ENCODE measurements at regions of chr10 and their contacts with region 1.

Region 1: DNA sequence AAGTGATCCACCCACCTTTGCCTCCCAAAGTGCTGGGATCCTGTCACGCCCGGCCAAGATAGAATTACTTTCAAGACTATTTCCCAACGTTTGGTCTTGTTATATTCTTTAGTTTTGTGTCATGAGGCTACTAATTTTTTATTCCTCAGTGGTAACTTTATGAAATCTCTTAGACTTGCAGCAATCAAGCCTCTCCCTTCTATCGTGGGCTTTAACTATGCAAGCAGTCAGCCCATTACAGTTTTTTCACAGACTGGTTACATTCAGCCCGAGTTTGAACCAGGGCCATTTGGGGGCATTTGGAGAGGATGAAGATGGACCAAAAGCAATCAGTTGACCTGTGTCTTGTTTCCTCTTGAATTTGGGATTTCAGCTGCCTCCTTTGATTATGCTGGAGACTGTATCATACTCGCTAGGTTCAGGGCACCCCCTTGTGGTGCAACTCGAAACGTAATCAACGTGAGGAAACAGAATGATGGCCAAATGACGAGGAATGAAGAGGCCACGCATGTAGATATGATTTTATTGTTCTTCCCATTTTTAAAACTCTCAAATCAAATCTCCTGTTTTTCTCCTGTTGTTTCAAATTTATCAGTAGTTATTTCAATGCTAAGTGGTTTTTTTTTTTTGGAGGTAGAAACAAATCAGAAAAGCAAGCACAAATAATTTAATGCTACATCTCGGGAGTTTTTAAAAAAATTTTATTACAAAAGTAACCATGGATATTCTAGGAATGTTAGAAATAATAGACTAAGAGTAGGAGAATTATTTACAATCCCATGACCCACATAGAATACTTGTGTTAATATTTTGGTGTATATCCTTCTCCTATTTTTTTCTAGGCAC is 151.6 kb downstream of the KIAA1217 start:
- DNase-seq: peak; percentile 40
- H3K4me3 Mint-ChIP-seq: no peak overlapping the region
- H3K27ac Mint-ChIP-seq: no peak overlapping the region
- H3K4me1 Mint-ChIP-seq: no peaks in the 10 kb centered on the region
- H3K27me3 Mint-ChIP-seq: no peaks in the 10 kb centered on the region

Region 2: GRCh38 chr10:24255881-24256311 is 104.6 kb before region 1 on chr10:
- CTCF ChIA-PET with region 1: no interaction called
- DNase-seq: no peak
- H3K4me3 Mint-ChIP-seq: no peak overlapping the region
- H3K27ac Mint-ChIP-seq: no peak overlapping the region
- H3K4me1 Mint-ChIP-seq: no peaks in the 10 kb centered on the region
- H3K27me3 Mint-ChIP-seq: no peaks in the 10 kb centered on the region

Region 3: GRCh38 chr10:24503461-24504320 is 143.2 kb after region 1 on chr10:
- CTCF ChIA-PET with region 1: interaction called, 12 read pairs
- DNase-seq: peak; percentile 40
- H3K4me3 Mint-ChIP-seq: no peak overlapping the region
- H3K27ac Mint-ChIP-seq: no peak overlapping the region
- H3K4me1 Mint-ChIP-seq: no peaks in the 10 kb centered on the region
- H3K27me3 Mint-ChIP-seq: no peaks in the 10 kb centered on the region